ENCODE measurements at regions of chr3 and their contacts with region 1.

Region 1: GRCh38 chr3:88003115-88003755 is 55.6 kb downstream of the CGGBP1 start:
- DNase-seq: no peak
- ATAC-seq: peak; percentile 49

Region 2: DNA sequence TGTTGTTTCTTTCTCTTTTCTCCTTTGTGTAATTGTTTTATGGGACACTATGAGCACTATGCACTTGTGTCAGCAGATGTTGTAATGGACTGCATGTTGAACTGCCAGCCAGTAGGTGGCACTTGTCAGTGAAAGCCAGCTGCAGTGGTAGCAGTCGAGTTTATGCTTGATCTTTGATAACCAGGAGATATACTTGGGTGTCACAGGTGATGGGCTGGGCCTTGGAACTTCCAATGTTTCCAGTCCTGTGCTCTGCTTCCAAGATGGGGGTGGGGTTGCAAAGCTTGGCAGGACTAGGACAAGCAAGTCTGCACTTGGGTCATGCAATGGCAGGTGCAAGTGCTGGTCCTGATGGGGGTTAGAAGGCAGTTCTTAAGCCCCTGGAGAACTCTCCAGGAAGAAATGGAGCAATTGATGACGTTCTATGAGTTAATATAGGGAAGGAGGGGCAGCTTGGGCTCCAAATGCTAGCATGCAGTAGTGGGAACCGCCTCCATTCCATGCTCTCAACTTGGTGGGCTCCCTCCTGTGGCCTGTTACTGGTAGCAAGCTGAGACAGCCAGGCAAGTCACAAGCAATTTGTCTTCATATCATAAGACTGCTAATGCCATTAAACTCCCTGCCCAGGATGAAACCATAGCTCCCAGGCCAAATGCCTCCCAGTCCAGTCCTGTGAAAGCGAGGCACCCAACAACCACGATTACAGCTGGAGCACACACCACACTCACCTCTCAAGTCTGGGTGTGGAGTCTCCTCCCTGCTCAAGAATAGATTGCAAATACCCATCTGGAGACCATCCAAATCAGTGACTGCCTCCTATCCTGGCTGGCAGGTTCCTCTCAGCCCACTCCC is 231.7 kb before region 1 on chr3:
- intact Hi-C with region 1: loop called in 1 of 2 experiments (anchors 5 kb)
- DNase-seq: peak in 1 of 2 donors; percentile 22
- ATAC-seq: peak; percentile 85

Region 3: DNA sequence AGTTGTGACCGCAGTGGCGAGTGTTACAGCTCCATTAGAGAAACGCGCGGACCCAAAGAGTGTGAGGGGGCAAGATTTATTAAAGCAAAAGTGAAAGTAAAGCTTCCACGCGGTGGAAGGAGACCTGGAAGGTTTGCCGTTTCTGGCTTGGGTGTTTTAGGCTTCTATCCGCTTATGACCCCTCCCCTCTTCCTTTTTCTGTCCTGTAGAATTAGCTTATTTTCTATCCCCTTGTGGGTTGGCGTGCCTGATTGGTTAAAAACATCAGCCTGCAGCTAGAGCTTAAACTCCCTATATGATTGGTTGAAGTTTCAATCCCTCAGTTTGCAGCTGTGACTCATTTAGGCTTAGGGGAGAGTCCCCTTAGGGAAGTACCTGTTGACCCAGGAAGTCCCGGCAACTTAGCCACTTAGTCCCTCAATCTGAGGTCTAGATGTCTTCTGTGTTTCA is 186.2 kb after region 1 on chr3:
- intact Hi-C with region 1: no loop called
- DNase-seq: no peak
- ATAC-seq: no peak